Activated B cell treated with CpG ODN at 0.5 μM for 24 hours (primary cell): ENCODE measurements at regions of chr11 and their contacts with region 1.

Region 1: DNA sequence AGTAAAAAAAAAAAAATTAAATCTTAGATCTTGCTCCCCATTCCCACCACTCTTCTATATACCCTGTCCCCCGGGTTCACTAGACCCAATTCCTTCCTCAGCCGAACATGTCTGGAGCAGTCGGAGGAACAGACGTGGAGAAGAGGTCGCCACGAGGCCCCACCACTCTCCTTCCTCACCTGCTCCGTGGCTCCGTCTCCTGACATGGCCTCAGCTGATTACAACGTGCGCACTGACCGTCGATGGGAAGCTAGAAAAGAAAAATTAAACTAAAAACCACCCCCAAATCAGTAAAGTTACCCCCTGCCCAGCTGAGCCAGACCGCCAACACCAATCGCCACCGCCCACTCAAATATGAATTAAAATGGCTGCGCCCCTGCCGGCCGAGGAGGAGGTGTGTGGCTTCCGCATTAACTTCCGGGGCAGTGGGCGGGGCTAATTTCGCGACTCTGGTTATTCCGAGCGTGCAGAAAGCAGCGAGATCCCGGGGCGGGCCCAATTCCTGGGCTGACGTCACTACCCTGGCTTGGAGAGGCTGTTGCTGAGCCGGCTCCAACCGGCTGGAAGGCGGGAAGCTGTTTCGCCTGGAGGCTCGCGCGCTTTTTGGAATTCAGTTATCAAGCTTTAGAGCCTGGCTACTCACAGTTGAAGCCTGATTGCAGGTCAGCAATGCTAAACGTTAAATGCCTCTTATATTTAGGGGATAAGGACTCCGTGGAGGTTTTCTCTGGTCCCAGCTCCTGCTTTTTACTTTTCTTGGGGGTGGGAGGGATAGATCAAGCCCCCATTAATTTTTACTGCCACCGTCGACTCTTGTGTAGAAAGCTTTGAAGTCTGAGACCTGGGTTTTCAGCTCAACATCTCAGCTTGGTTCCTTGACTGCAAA is at the start of gene CSTF3:
- DNase-seq: peak; percentile 92
- ATAC-seq: peak; percentile 96
- H3K4me3 Mint-ChIP-seq: peak within 1 kb of the TSS; percentile 99
- H3K27ac Mint-ChIP-seq: peak within 1 kb of the TSS; percentile 95
- H3K4me1 Mint-ChIP-seq: peaks cover 44% of the 10 kb centered on the region
- H3K27me3 Mint-ChIP-seq: no peaks in the 10 kb centered on the region
- CTCF ChIP-seq: no peak
- total RNA-seq, gene CSTF3: 30.0 and 33.5 TPM in 2 replicates

Region 2: DNA sequence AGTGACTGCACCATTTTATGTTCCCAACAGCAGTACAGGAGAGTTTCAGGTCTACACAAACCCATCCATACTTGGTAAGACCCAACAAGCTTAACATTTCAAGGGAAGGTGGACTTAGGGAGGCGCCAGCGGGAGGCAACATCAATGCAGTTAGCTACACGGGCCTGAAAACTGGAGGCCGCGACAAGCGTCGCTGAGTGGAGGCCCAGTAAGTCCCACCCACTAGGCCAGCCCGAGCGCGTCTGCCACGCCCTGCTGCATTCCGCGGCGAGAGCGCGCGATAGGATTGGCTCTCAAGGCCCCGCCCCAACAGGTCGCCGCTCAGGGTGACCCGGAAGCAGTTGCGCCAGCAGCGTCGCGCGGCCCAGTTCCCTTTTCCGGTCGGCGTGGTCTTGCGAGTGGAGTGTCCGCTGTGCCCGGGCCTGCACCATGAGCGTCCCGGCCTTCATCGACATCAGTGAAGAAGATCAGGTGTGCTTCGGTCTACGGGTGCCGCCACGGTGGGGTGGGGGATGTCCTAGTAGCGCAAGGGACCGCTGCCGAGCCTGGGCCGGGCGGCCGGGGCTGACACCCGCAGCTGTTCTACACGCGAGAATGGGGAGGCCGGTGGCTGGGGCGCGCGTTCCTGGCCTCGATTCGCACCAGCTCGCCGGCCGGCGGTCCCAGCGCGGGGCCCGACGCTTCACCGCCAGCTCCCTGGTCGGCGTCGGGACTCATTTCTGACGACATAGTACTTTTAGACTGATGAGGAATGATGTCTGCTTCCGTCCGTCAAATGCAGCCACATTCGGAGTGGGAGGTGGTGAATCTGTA is 577.7 kb before region 1 on chr11 and contains the start of gene EIF3M:
- CTCF ChIA-PET with region 1: no interaction called
- POLR2A ChIA-PET with region 1: no interaction called
- intact Hi-C with region 1: loop called (anchors 1 kb)
- DNase-seq: peak; percentile 90
- ATAC-seq: peak; percentile 100
- H3K4me3 Mint-ChIP-seq: peak within 1 kb of the TSS; percentile 95
- H3K27ac Mint-ChIP-seq: peak within 1 kb of the TSS; percentile 92
- H3K4me1 Mint-ChIP-seq: peaks cover 41% of the 10 kb centered on the region
- H3K27me3 Mint-ChIP-seq: no peaks in the 10 kb centered on the region
- CTCF ChIP-seq: no peak
- total RNA-seq, gene EIF3M: 234 and 248 TPM in 2 replicates

Region 3: GRCh38 chr11:33039274-33040032 is 121.9 kb before region 1 on chr11 and contains the start of gene TCP11L1:
- CTCF ChIA-PET with region 1: no interaction called
- POLR2A ChIA-PET with region 1: interaction called, 3 read pairs
- intact Hi-C with region 1: loop called (anchors 1 kb)
- DNase-seq: peak; percentile 77
- ATAC-seq: peak; percentile 85
- H3K4me3 Mint-ChIP-seq: peak within 1 kb of the TSS; percentile 95
- H3K27ac Mint-ChIP-seq: peak within 1 kb of the TSS; percentile 95
- H3K4me1 Mint-ChIP-seq: peaks cover 13% of the 10 kb centered on the region
- H3K27me3 Mint-ChIP-seq: peaks cover 8% of the 10 kb centered on the region
- CTCF ChIP-seq: no peak
- total RNA-seq, gene TCP11L1: 13.5 and 17.7 TPM in 2 replicates

Region 4: GRCh38 chr11:33187998-33188722 is 26.8 kb after region 1 on chr11:
- CTCF ChIA-PET with region 1: no interaction called
- POLR2A ChIA-PET with region 1: no interaction called
- intact Hi-C with region 1: no loop called
- DNase-seq: no peak
- ATAC-seq: no peak
- H3K4me3 Mint-ChIP-seq: no peak overlapping the region
- H3K27ac Mint-ChIP-seq: no peak overlapping the region
- H3K4me1 Mint-ChIP-seq: no peaks in the 10 kb centered on the region
- H3K27me3 Mint-ChIP-seq: no peaks in the 10 kb centered on the region
- CTCF ChIP-seq: no peak

Region 5: GRCh38 chr11:33700425-33701271 is 539.3 kb after region 1 on chr11 and contains the start of gene C11orf91:
- CTCF ChIA-PET with region 1: no interaction called
- POLR2A ChIA-PET with region 1: no interaction called
- intact Hi-C with region 1: loop called (anchors 1 kb)
- DNase-seq: peak; percentile 97
- ATAC-seq: peak; percentile 98
- H3K4me3 Mint-ChIP-seq: peak within 1 kb of the TSS; percentile 91
- H3K27ac Mint-ChIP-seq: peak within 1 kb of the TSS; percentile 47
- H3K4me1 Mint-ChIP-seq: peaks cover 13% of the 10 kb centered on the region
- H3K27me3 Mint-ChIP-seq: peaks cover 2% of the 10 kb centered on the region
- CTCF ChIP-seq: no peak
- total RNA-seq, gene C11orf91: 0.49 TPM in 1 of 2 replicates, not detected in the other

Region 6: GRCh38 chr11:33742249-33742851 is 581.0 kb after region 1 on chr11:
- CTCF ChIA-PET with region 1: interaction called, 16 read pairs
- POLR2A ChIA-PET with region 1: no interaction called
- intact Hi-C with region 1: loop called (anchors 2 kb)
- DNase-seq: no peak
- ATAC-seq: peak; percentile 65
- H3K4me3 Mint-ChIP-seq: no peak overlapping the region
- H3K27ac Mint-ChIP-seq: no peak overlapping the region
- H3K4me1 Mint-ChIP-seq: no peaks in the 10 kb centered on the region
- H3K27me3 Mint-ChIP-seq: no peaks in the 10 kb centered on the region
- CTCF ChIP-seq: no peak

Region 7: GRCh38 chr11:34438529-34439507 is 1277.5 kb after region 1 on chr11 and contains the start of gene CAT:
- CTCF ChIA-PET with region 1: no interaction called
- POLR2A ChIA-PET with region 1: no interaction called
- intact Hi-C with region 1: loop called (anchors 10 kb)
- DNase-seq: peak; percentile 96
- ATAC-seq: peak; percentile 90
- H3K4me3 Mint-ChIP-seq: peak within 1 kb of the TSS; percentile 99
- H3K27ac Mint-ChIP-seq: peak within 1 kb of the TSS; percentile 98
- H3K4me1 Mint-ChIP-seq: peaks cover 43% of the 10 kb centered on the region
- H3K27me3 Mint-ChIP-seq: no peaks in the 10 kb centered on the region
- CTCF ChIP-seq: no peak
- total RNA-seq, gene CAT: 79.8 and 81.2 TPM in 2 replicates